Activated CD8-positive, alpha-beta T cell treated with anti-CD3 and anti-CD28 coated beads for 36 hours (primary cell): ENCODE measurements at regions of chr14 and their contacts with region 1.

Region 1: DNA sequence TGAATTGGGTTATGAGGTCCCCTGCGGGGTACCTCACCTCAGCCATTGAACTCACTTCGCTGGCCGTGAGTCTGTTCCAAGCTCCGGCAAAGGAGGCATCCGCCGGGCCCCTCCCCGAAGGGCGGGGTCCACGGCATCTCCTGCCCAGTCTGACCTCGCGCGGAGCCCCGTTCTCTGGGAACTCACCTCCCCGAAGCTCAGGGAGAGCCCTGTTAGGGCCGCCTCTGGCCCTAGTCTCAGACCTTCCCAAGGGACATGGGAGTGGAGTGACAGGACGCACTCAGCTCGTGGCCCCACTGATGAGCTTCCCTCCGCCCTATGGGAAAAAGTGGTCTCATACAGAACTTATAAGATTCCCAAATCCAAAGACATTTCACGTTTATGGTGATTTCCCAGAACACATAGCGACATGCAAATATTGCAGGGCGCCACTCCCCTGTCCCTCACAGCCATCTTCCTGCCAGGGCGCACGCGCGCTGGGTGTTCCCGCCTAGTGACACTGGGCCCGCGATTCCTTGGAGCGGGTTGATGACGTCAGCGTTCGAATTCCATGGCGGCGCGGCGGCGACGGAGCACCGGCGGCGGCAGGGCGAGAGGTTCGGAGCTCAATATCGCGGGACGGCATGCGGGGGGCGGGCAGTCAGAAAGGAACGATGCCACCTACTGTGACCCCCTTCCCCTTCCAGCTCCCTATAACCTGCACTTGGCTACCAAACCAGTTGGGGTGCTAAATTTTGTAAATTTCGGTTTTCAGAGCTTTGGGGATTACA is at the start of gene PARP2:
- DNase-seq: peak; percentile 96
- ATAC-seq: peak; percentile 91
- H3K4me3 Mint-ChIP-seq: peak within 1 kb of the TSS; percentile 89
- H3K27ac Mint-ChIP-seq: peak within 1 kb of the TSS; percentile 96
- H3K4me1 Mint-ChIP-seq: peaks cover 11% of the 10 kb centered on the region
- H3K27me3 Mint-ChIP-seq: no peaks in the 10 kb centered on the region
- CTCF ChIP-seq: no peak
- total RNA-seq, gene PARP2: 45.7 to 46.5 TPM

Region 2: DNA sequence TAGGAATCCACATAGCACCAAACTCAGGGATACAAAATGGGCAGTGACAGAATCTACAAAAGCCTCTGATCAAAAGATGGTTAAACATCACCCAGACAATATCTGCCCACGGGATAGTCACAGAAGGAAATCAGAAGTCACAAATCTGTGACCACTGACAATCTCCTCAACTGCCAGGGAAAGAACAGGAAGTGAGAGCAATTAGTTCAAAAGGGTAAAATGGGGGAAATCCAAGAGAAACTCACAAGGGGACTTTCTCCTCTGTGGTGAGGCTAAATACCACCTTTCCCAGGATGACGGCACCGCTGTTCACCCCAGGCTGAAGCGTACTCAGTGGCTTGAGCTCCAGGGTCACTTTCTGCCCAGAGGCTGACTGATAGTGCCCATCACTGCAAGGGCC is 48.2 kb before region 1 on chr14:
- CTCF ChIA-PET with region 1: no interaction called
- POLR2A ChIA-PET with region 1: no interaction called
- intact Hi-C with region 1: no loop called
- DNase-seq: peak; percentile 26
- ATAC-seq: peak; percentile 27
- H3K4me3 Mint-ChIP-seq: no peak overlapping the region
- H3K27ac Mint-ChIP-seq: no peak overlapping the region
- H3K4me1 Mint-ChIP-seq: peaks cover 6% of the 10 kb centered on the region
- H3K27me3 Mint-ChIP-seq: no peaks in the 10 kb centered on the region
- CTCF ChIP-seq: no peak

Region 3: DNA sequence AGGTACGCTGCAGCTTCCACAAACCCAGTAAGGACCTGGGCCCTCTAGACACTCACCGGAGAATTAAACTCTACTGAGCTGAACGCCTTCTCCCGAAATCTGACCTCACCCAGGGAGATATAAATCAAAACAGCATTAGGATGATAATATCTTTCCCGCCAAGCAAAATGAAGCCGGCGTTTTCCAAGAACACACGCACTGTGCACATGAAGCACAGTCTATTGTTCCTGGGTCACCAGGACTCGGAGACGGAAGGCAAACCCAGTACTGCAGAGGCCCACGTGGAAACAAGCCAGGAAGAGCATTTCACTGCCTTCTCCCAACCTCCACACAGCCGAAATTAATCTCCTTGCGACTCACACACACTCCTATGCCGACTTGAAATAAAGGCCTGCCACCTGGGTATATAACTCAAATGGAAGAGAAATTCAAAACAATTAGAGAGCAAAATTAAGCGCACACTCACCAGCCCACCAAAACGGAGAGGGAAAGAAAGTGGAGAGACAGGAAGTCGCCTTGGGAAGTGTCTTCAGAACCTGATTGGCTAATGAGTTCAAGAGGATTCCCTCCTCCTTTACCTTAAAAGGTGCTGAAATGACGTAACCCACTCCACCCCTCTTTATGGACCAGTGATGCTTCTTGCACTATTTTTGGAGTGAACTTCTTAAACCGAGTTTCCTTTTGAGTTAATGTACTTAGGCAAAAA is 10.3 kb before region 1 on chr14 and contains the start of gene CCNB1IP1:
- CTCF ChIA-PET with region 1: interaction called, 125 read pairs
- POLR2A ChIA-PET with region 1: interaction called, 40 read pairs
- intact Hi-C with region 1: no loop called
- DNase-seq: peak; percentile 67
- ATAC-seq: peak; percentile 99
- H3K4me3 Mint-ChIP-seq: peak within 1 kb of the TSS; percentile 97
- H3K27ac Mint-ChIP-seq: peak within 1 kb of the TSS; percentile 93
- H3K4me1 Mint-ChIP-seq: peaks cover 34% of the 10 kb centered on the region
- H3K27me3 Mint-ChIP-seq: peaks cover 2% of the 10 kb centered on the region
- CTCF ChIP-seq: no peak
- total RNA-seq, gene CCNB1IP1: 79.0 to 82.7 TPM

Region 4: DNA sequence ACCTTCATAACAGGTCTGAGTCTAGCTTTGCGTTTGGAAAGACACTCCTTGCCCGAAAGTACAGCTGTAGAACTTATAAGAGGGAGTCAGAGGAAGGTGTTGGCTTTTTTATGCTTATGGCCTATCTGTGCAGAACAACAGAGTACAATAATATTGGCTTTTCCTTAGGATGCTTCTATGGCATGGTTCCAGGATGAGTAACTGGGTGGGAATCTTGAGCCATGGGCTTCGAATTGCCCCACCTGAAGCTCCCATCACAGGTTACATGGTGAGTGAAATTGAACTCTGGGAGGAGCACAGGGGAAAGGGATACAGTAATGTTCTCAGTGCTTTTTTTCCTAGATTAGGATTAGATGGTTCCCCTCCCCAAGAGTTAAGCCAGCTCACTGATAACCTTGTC is 13.1 kb after region 1 on chr14:
- CTCF ChIA-PET with region 1: interaction called, 7 read pairs
- POLR2A ChIA-PET with region 1: interaction called, 14 read pairs
- intact Hi-C with region 1: no loop called
- DNase-seq: no peak
- ATAC-seq: no peak
- H3K4me3 Mint-ChIP-seq: no peak overlapping the region
- H3K27ac Mint-ChIP-seq: no peak overlapping the region
- H3K4me1 Mint-ChIP-seq: peaks cover 10% of the 10 kb centered on the region
- H3K27me3 Mint-ChIP-seq: no peaks in the 10 kb centered on the region
- CTCF ChIP-seq: no peak

Region 5: DNA sequence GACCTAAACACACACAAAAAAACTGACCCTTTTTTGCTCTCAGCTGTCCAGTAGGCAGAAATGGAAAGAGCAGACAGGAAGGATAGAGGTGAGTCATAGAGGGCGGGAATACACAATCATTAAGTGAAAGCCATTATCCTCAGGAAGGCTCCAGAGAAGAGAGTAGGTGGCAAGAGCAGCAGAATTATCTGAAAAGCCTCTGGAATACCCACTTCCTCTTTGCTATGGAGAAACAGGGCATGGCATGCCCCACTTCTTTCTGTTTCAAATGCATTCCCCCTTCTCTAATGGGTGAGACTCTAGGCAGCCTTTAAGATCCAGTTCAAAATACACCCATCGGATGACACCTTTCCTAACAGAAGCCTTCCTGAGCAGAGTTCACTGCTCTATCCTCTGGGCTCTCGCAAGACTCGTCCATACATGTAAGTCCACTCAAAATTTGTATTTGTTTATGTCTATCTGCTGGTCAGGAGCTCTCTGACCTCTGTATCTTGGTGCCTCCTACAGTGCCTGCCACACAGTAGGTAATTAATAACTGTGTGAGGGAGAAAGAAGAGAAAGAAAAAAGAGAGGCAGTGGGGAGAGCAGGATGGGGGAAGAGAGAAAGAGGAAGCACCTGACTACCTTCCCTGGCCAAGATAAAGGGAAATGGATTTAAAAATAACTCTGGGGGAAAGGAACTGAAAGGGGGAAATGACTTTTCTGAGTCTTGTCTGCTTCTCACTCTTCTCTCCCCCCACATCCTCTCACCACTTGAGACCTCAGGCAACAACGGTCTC is 84.1 kb after region 1 on chr14:
- CTCF ChIA-PET with region 1: interaction called, 3 read pairs
- POLR2A ChIA-PET with region 1: interaction called, 14 read pairs
- intact Hi-C with region 1: no loop called
- DNase-seq: peak; percentile 26
- ATAC-seq: peak; percentile 72
- H3K4me3 Mint-ChIP-seq: peak overlapping the region; percentile 63
- H3K27ac Mint-ChIP-seq: peak overlapping the region; percentile 91
- H3K4me1 Mint-ChIP-seq: peaks cover 42% of the 10 kb centered on the region
- H3K27me3 Mint-ChIP-seq: no peaks in the 10 kb centered on the region
- CTCF ChIP-seq: no peak

Region 6: GRCh38 chr14:20454516-20455354 is 111.5 kb after region 1 on chr14 and contains the starts of genes APEX1 and OSGEP:
- CTCF ChIA-PET with region 1: interaction called, 5 read pairs
- POLR2A ChIA-PET with region 1: interaction called, 21 read pairs
- intact Hi-C with region 1: no loop called
- DNase-seq: peak; percentile 99
- ATAC-seq: peak; percentile 91
- H3K4me3 Mint-ChIP-seq: no peak within 1 kb of the TSS
- H3K27ac Mint-ChIP-seq: no peak within 1 kb of the TSS
- H3K4me1 Mint-ChIP-seq: peaks cover 19% of the 10 kb centered on the region
- H3K27me3 Mint-ChIP-seq: no peaks in the 10 kb centered on the region
- CTCF ChIP-seq: no peak
- total RNA-seq, gene APEX1: 196 to 211 TPM
- total RNA-seq, gene OSGEP: 39.5 to 40.7 TPM

Region 7: GRCh38 chr14:20461274-20462001 is 118.2 kb after region 1 on chr14 and contains the start of gene PIP4P1:
- CTCF ChIA-PET with region 1: interaction called, 3 read pairs
- POLR2A ChIA-PET with region 1: interaction called, 13 read pairs
- intact Hi-C with region 1: loop called (anchors 5 kb)
- DNase-seq: peak; percentile 99
- ATAC-seq: peak; percentile 95
- H3K4me3 Mint-ChIP-seq: peak within 1 kb of the TSS; percentile 90
- H3K27ac Mint-ChIP-seq: peak within 1 kb of the TSS; percentile 98
- H3K4me1 Mint-ChIP-seq: peaks cover 26% of the 10 kb centered on the region
- H3K27me3 Mint-ChIP-seq: no peaks in the 10 kb centered on the region
- CTCF ChIP-seq: no peak
- total RNA-seq, gene PIP4P1: 21.0 to 27.3 TPM

Region 8: DNA sequence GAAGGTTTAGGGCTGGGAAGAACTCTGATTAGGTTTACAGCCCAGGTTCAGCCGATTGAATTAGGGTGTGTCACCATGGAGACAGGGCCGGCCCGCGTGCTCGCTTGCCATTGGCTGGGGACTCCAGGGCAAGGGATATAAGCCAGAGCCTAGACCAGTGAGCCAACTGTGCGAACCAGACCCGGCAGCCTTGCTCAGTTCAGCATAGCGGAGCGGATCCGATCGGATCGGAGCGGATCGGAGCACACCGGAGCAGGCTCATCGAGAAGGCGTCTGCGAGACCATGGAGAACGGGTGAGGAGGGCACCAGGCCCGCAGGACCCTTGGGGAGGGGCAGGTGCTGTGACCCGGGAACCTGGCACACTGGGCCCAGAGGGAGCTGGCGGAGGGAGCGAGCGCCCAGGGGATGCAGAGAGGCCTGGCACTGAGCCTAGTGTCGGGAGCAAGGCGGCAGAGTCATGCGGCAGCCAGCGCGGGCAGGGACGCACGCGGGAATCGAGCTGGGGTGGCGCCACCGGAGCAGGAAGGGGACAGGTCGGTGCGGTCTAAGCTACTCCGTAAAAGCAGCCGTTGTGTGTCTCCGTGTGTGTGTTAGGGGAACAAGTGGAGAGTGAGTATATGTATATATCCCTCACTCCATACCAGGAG is 126.1 kb after region 1 on chr14 and contains the start of gene PNP:
- CTCF ChIA-PET with region 1: no interaction called
- POLR2A ChIA-PET with region 1: interaction called, 23 read pairs
- intact Hi-C with region 1: loop called (anchors 5 kb)
- DNase-seq: peak; percentile 92
- ATAC-seq: peak; percentile 94
- H3K4me3 Mint-ChIP-seq: peak within 1 kb of the TSS; percentile 86
- H3K27ac Mint-ChIP-seq: peak within 1 kb of the TSS; percentile 93
- H3K4me1 Mint-ChIP-seq: peaks cover 33% of the 10 kb centered on the region
- H3K27me3 Mint-ChIP-seq: no peaks in the 10 kb centered on the region
- CTCF ChIP-seq: no peak
- total RNA-seq, gene PNP: 176 to 183 TPM

Region 9: DNA sequence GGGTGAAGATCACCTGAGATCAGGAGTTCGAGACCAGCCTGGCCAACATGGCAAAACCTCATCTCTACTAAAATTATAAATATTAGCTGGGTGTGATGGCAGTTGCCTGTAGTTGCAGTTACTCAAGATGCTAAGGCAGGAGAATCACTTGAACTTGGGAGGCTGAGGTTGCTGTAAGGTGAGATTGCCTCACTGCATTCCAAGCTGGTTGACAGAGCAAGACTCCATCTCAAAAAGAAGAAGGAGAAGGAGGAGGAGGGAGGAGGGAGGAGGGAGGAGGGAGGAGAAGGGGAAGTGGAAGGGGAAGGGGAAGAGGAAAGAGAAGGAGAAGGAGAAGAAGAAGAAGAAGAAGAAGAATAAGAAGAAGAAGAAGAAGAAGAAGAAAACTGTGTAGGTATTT is 179.1 kb after region 1 on chr14:
- CTCF ChIA-PET with region 1: no interaction called
- POLR2A ChIA-PET with region 1: no interaction called
- intact Hi-C with region 1: no loop called
- DNase-seq: no peak
- ATAC-seq: no peak
- H3K4me3 Mint-ChIP-seq: no peak overlapping the region
- H3K27ac Mint-ChIP-seq: no peak overlapping the region
- H3K4me1 Mint-ChIP-seq: no peaks in the 10 kb centered on the region
- H3K27me3 Mint-ChIP-seq: no peaks in the 10 kb centered on the region
- CTCF ChIP-seq: no peak

Region 10: DNA sequence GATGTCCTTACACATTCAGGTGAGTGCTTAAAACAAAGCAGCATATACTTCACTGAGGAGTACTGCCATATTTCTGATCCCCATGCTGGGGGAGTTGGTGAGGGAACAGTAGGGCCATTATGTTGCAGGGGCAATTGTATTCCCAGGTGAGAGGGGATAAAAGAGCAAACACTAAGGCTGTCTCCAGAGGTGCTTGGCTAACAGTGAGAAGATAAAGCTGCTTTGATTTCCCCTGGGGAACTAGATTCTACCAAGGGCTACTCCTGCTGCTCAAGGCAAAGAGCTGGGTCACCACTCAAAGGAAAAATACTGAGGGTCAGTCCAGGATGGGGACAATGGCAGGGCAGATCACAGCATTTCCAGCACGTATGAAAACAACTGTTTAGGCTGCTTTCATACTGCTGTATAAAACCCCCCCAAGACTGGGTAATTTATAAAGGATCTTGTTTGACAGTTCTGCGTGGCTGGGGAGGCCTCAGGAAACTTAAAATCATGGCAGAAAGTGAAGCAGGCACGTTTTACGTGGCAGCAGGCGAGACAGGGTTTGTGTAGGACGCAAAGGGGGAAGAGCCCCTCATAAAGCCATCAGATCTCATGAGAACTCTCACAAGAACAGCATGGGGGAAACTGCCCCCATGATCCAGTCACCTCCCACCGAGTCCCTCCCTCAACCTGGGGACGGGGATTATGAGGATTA is 860.3 kb after region 1 on chr14:
- CTCF ChIA-PET with region 1: no interaction called
- POLR2A ChIA-PET with region 1: no interaction called
- intact Hi-C with region 1: no loop called
- DNase-seq: no peak
- ATAC-seq: no peak
- H3K4me3 Mint-ChIP-seq: no peak overlapping the region
- H3K27ac Mint-ChIP-seq: peak overlapping the region; percentile 60
- H3K4me1 Mint-ChIP-seq: peaks cover 21% of the 10 kb centered on the region
- H3K27me3 Mint-ChIP-seq: no peaks in the 10 kb centered on the region
- CTCF ChIP-seq: no peak